ENCODE measurements at regions of chr2 and their contacts with region 1.

Region 1: GRCh38 chr2:163345908-163346573 is 389.8 kb downstream of the FIGN start:
- DNase-seq: no peak
- H3K4me3 ChIP-seq: no peak overlapping the region
- H3K27ac ChIP-seq: no peak overlapping the region
- H3K4me1 ChIP-seq: no peaks in the 10 kb centered on the region
- H3K27me3 ChIP-seq: no peaks in the 10 kb centered on the region
- CTCF ChIP-seq: peak; percentile 73

Region 2: DNA sequence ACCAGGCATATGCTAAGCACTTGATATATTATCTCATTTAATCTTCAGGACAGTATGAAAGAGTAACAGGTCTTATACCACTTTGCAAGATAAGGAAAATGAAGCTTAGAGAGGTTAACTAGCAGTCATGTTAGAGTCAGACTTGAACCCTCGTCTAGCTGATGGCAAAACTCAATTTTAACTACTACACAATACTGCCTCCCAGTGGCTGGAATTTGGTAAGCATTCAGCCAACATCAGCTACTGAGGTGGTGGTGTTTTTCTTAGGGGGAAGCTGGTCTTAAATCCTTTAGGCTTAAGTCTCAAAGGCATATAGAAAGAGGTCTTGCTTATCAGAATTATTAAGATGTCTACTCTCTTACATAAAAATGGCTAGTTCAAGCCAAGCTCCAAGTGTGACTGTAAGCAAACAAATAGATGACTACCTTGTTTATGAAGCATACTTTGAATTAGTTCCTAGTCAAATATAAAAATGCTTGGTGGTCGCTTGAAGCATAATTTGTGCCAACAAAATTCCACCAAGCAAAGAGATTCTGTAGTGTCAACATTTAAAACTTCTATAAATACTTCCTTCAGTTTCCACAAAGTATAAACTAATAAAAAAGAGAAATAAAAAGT is 715.2 kb after region 1 on chr2:
- intact Hi-C with region 1: loop called (anchors 5 kb)
- DNase-seq: peak; percentile 22
- H3K4me3 ChIP-seq: no peak overlapping the region
- H3K27ac ChIP-seq: no peak overlapping the region
- H3K4me1 ChIP-seq: no peaks in the 10 kb centered on the region
- H3K27me3 ChIP-seq: no peaks in the 10 kb centered on the region
- CTCF ChIP-seq: peak; percentile 19

Region 3: GRCh38 chr2:164495491-164496223 is 1149.6 kb after region 1 on chr2:
- intact Hi-C with region 1: loop called (anchors 5 kb)
- DNase-seq: no peak
- H3K4me3 ChIP-seq: no peak overlapping the region
- H3K27ac ChIP-seq: no peak overlapping the region
- H3K4me1 ChIP-seq: no peaks in the 10 kb centered on the region
- H3K27me3 ChIP-seq: no peaks in the 10 kb centered on the region
- CTCF ChIP-seq: no peak